ENCODE measurements at regions of chr20 and their contacts with region 1.

Region 1: DNA sequence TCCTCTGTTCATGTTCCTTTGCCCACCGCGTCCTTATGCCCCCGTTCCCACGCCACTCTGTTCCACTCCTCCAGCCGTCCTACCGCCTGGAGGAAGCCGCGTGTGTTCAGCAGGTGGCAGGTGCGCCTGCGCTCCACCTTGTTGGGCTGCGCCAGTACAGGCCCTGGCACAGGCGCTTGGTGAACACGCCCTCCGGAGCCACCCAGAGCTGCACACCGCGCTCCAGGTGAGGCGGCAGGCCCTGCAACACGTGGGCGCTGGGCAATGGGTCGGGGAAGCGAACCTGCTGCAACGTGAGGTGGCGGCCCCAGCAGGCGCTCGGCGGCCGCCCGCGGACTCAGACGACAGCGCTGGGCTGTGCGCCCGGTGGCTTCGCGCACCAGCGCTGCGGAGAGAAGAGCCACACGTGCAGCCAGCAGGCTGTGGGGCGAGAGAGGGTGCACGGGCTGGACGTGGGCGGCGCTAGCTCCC is 4.1 kb upstream of the FOXS1 start:
- DNase-seq: no peak
- ATAC-seq: no peak; the same call in 1 of the 2 replicates
- H3K4me3 Mint-ChIP-seq: no peak overlapping the region
- H3K27ac Mint-ChIP-seq: no peak overlapping the region
- H3K4me1 Mint-ChIP-seq: 0 out of 2 replicates have a peak, but pooled peaks cover 4% of the 10 kb centered on the region
- H3K27me3 Mint-ChIP-seq: peaks cover 40% of the 10 kb centered on the region
- CTCF ChIP-seq: no peak

Region 2: DNA sequence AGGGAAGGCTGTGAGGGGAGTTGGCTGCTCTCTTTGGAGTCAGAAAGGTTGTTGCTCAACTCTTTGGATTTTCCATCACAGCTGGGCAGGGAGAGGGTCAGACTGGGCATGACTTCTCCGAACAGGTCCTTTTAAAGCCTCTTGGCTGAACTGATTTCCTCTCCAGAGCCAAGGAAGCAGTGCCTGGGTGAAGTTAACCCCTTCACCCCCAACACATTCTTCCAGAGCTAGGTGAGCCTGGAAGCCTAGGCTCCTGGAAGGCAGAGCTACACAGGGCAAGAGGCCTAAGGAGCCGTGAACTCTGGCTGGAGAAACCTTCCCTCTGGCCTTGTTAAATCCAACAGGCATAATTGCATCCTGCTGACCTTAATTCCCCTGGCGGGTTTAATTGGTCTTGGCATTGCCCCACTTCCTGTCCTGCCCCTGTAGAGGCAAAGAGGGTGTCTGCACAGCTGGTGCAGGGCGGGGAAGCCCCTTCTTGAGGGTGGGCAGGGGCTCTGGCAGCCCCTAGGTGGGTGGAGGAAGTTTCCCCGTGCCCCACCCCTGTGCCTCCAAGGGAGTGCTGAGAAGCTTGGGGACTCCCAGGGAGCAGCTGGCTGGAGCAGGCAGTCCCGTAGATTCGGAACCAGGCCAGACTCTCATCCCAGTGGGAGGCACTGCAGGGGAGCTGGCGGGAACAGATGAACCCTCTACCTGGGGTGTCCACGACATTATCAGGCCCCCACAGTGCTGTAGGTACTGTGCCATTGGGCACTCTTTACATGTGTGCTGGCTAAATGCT is 33.9 kb before region 1 on chr20:
- CTCF ChIA-PET with region 1: interaction called, 23 read pairs
- POLR2A ChIA-PET with region 1: no interaction called
- DNase-seq: no peak
- ATAC-seq: peak; percentile 59
- H3K4me3 Mint-ChIP-seq: no peak overlapping the region
- H3K27ac Mint-ChIP-seq: no peak overlapping the region
- H3K4me1 Mint-ChIP-seq: peaks cover 5% of the 10 kb centered on the region
- H3K27me3 Mint-ChIP-seq: no peaks in the 10 kb centered on the region
- CTCF ChIP-seq: no peak

Region 3: GRCh38 chr20:31861346-31862156 is 12.1 kb after region 1 on chr20:
- CTCF ChIA-PET with region 1: interaction called, 28 read pairs
- POLR2A ChIA-PET with region 1: interaction called, 3 read pairs
- DNase-seq: peak; percentile 82
- ATAC-seq: peak; percentile 82
- H3K4me3 Mint-ChIP-seq: peak overlapping the region; percentile 91
- H3K27ac Mint-ChIP-seq: peak overlapping the region; percentile 93
- H3K4me1 Mint-ChIP-seq: peaks cover 15% of the 10 kb centered on the region
- H3K27me3 Mint-ChIP-seq: peaks cover 37% of the 10 kb centered on the region
- CTCF ChIP-seq: no peak

Region 4: DNA sequence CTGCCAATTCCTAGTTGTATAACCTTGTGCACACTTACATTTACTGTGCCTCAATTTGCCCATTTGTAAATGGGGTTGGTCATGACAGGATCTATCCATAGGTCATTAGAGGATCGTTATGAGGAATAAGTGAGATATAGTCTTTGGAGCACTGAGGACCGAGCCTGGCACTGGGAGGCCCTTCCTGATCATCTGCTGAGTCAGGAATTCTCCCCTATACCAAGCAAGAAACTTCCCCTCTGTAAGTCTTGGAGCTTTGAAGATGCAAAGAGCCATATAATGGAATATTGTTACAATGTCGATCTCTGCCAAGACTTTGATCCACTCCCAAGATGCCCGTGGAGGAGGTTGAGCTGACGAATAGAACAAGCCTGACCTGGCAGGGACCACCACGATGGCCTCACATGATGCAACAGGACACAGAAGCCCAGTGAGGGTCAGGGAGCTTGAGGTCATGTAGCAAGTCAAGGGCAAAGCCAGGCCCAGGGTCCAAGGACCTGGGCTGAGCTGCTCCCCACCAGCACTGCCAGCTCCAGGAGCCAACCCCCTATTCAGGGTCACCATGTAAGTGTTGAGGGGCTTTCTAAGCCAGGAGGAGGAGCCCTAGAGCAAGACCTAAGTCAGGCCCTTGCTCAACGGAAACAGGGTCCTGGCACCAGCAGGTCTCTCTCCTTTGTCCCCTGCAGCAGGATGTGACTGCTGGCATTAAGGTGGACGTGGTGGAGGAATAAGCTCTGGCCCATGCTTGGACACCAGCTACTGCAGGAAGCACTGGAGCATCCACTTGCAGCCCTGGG is 85.7 kb after region 1 on chr20:
- CTCF ChIA-PET with region 1: interaction called, 69 read pairs
- POLR2A ChIA-PET with region 1: no interaction called
- DNase-seq: peak; percentile 49
- ATAC-seq: peak; percentile 97
- H3K4me3 Mint-ChIP-seq: no peak overlapping the region
- H3K27ac Mint-ChIP-seq: no peak overlapping the region
- H3K4me1 Mint-ChIP-seq: peaks cover 8% of the 10 kb centered on the region
- H3K27me3 Mint-ChIP-seq: peaks cover 4% of the 10 kb centered on the region; the same call in 1 of the 2 replicates
- CTCF ChIP-seq: no peak; the same call in 1 of the 2 replicates

Region 5: GRCh38 chr20:31990641-31991338 is 141.3 kb after region 1 on chr20:
- CTCF ChIA-PET with region 1: interaction called, 18 read pairs
- POLR2A ChIA-PET with region 1: no interaction called
- DNase-seq: no peak
- ATAC-seq: no peak
- H3K4me3 Mint-ChIP-seq: no peak overlapping the region
- H3K27ac Mint-ChIP-seq: no peak overlapping the region
- H3K4me1 Mint-ChIP-seq: peaks cover 9% of the 10 kb centered on the region
- H3K27me3 Mint-ChIP-seq: peaks cover 41% of the 10 kb centered on the region
- CTCF ChIP-seq: no peak

Region 6: DNA sequence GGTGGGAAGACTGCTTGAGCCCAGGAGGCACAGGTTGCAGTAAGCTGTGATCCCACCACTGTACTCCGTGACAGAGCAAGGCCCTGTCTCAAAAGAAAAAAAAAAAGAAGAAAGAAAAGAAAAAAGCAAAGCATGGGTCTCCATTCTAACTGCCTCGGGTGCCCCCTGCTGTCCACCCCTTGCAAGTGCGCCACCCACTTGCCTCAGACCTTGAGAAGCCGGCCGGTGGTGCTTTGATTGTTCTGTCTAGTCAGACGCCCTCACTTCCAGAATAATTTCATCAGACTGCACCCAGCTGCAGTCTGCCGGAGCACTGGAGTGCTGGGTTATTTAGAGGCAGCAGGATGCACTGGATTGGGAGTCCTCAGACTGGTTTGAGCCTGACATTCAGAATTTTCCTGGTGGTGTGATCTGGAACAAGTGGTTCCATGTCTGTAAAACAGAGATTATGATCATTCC is 242.4 kb after region 1 on chr20:
- CTCF ChIA-PET with region 1: interaction called, 46 read pairs
- POLR2A ChIA-PET with region 1: no interaction called
- DNase-seq: peak; percentile 91
- ATAC-seq: peak; percentile 62
- H3K4me3 Mint-ChIP-seq: no peak overlapping the region
- H3K27ac Mint-ChIP-seq: no peak overlapping the region
- H3K4me1 Mint-ChIP-seq: peaks cover 33% of the 10 kb centered on the region
- H3K27me3 Mint-ChIP-seq: peaks cover 6% of the 10 kb centered on the region; the same call in 1 of the 2 replicates
- CTCF ChIP-seq: peak; percentile 82